ENCODE measurements at regions of chr11 and their contacts with region 1.

Region 1: GRCh38 chr11:134360050-134360835 is 28.5 kb downstream of the GLB1L2 start:
- DNase-seq: peak; percentile 69
- H3K4me3 Mint-ChIP-seq: no peak overlapping the region
- H3K27ac Mint-ChIP-seq: peak overlapping the region; percentile 20
- H3K4me1 Mint-ChIP-seq: peaks cover 20% of the 10 kb centered on the region
- H3K27me3 Mint-ChIP-seq: peaks cover 1% of the 10 kb centered on the region

Region 2: GRCh38 chr11:134313821-134314607 is 46.2 kb before region 1 on chr11:
- intact Hi-C with region 1: no loop called
- DNase-seq: no peak
- H3K4me3 Mint-ChIP-seq: no peak overlapping the region
- H3K27ac Mint-ChIP-seq: no peak overlapping the region
- H3K4me1 Mint-ChIP-seq: no peaks in the 10 kb centered on the region
- H3K27me3 Mint-ChIP-seq: peaks cover 2% of the 10 kb centered on the region

Region 3: GRCh38 chr11:134516529-134516928 is 156.3 kb after region 1 on chr11:
- intact Hi-C with region 1: no loop called
- DNase-seq: no peak
- H3K4me3 Mint-ChIP-seq: no peak overlapping the region
- H3K27ac Mint-ChIP-seq: no peak overlapping the region
- H3K4me1 Mint-ChIP-seq: no peaks in the 10 kb centered on the region
- H3K27me3 Mint-ChIP-seq: no peaks in the 10 kb centered on the region

Region 4: DNA sequence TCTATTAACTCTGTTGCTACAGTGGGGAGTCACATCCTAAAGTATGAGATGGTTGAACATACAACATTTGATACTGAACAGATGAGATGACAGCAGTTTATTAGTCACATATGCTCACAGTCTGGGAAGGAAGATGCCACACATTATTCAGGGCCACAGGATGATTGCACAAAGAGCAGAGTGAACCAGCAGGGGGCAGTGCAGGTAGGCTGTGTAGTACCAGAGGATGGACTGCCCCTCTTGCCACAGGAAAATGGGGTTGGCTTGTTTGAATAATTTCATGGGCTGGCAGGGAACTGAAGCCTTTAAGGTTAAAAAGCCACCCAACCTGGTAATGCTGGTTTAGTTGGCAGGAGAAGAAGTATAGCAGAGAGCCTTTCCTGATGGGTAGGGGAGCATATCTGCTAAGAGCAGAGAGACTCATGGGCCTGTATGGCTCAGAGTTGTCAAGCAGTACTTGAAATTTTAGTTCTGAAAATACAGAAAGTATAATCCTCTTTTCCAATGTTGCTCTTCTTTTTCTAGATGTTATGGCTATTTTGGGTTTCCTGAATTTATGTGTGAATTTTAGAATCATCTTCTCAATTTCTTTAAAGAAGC is 232.2 kb after region 1 on chr11:
- intact Hi-C with region 1: loop called (anchors 2 kb)
- DNase-seq: no peak
- H3K4me3 Mint-ChIP-seq: no peak overlapping the region
- H3K27ac Mint-ChIP-seq: no peak overlapping the region
- H3K4me1 Mint-ChIP-seq: no peaks in the 10 kb centered on the region
- H3K27me3 Mint-ChIP-seq: peaks cover 3% of the 10 kb centered on the region

Region 5: DNA sequence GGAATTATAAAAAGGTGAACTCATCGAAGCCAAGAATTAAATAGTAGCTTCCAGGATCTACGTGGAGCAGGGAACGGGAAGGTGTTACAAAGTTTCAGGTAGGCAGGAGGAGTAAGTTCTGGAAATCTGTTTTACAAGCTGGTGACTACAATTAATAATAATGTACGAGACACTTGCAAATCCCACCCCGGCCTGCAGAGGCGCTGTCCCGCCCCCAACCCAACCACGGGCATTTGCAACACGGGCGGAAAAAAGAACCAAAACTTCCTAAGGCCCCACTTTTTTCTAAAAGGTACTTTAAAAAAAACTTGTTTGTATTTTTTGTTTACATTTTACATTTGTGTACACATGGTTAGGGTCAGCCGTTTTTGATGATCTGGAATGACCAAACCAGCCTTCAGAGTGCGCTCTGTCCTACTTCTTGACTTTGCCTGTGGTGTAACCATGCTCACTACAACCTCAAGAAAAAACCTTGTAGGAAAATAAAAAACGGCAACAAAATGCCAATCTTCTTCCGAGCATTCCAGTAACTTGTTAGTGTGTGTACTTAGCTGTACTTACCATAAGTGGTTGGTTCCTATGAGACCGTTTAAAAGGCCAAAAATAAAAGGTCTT is 501.4 kb after region 1 on chr11:
- intact Hi-C with region 1: loop called (anchors 10 kb)
- DNase-seq: no peak
- H3K4me3 Mint-ChIP-seq: no peak overlapping the region
- H3K27ac Mint-ChIP-seq: no peak overlapping the region
- H3K4me1 Mint-ChIP-seq: no peaks in the 10 kb centered on the region
- H3K27me3 Mint-ChIP-seq: peaks cover 2% of the 10 kb centered on the region

Measured in activated T-helper 1 cell treated with anti-CD3 and anti-CD28 coated beads, Interleukin-12 subunit alpha, Interleukin-12 subunit beta, Interleukin-2, Interleukin-4 antibody, amounts not matched to agents 30 ng/mL and 10 ng/mL and 1 ng/mL, durations not matched to agents 14 hours and 24 hours and 36 hours (primary cell).